B cell (primary cell): ENCODE measurements at regions of chr16 and their contacts with region 1.

Region 1: DNA sequence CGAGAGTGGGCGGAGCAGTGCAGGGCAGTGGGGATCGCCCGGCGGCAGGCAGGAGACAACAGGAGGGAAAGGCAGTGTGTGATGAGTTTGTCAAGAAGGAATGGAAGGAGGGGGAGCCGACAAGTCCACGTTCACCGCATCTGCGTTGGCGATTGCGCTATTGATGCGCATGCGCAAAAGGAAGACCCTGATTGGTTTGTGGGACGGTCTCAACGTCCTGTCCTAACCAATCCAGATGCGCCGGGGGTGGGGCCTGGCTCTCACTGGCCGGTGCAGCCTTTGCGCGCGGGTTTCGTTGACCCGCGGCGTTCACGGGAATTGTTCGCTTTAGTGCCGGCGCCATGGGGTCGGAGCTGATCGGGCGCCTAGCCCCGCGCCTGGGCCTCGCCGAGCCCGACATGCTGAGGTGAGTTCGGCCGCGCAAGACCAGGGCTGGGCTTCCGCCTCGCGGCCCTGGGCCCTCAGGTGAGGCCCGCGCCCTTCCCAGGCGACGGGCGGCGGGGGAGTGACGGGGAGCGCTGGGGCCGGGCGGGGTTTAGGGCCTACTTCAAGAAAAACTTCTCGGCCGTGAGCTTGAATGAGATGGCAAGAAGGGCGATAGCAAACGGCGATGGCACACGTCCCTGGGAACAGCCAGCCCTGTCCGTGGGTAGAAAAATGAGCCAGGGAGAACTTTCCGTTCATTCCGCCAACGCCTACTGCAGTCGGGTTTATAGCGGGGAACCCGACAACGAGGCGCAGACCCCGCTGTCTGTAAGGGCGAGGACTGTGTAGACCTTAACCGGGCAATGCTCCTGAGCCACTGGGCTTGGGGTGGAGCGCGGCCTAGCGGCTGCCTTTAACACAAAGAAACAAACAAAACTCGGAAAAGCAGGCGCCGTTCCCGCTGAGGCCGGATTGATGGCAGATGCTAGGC is at the start of gene ORC6:
- DNase-seq: peak; percentile 100
- ATAC-seq: peak; percentile 74
- H3K4me3 ChIP-seq: peak within 1 kb of the TSS; percentile 97 to 98 (median 98)
- H3K4me3 Mint-ChIP-seq: no peak within 1 kb of the TSS
- H3K27ac ChIP-seq: peak within 1 kb of the TSS; percentile 94 to 95
- H3K27ac Mint-ChIP-seq: no peak within 1 kb of the TSS
- H3K4me1 ChIP-seq: peaks cover 48 to 50% of the 10 kb centered on the region in 2 donors
- H3K4me1 Mint-ChIP-seq: peaks cover 34% of the 10 kb centered on the region
- H3K27me3 ChIP-seq: no peaks in the 10 kb centered on the region
- H3K27me3 Mint-ChIP-seq: no peaks in the 10 kb centered on the region
- CTCF ChIP-seq: peak; percentile 61
- total RNA-seq, gene ORC6: 4.7 and 7.0 TPM in 2 replicates

Region 2: GRCh38 chr16:46621006-46621933 is 68.4 kb before region 1 on chr16 and contains the start of gene SHCBP1:
- CTCF ChIA-PET with region 1: no interaction called
- POLR2A ChIA-PET with region 1: no interaction called
- intact Hi-C with region 1: loop called (anchors 2 kb)
- DNase-seq: peak; percentile 78
- ATAC-seq: peak; percentile 94
- H3K4me3 ChIP-seq: peak within 1 kb of the TSS; percentile 54 to 78 (median 70)
- H3K4me3 Mint-ChIP-seq: peak within 1 kb of the TSS; percentile 97
- H3K27ac ChIP-seq: peak within 1 kb of the TSS; percentile 39 to 48
- H3K27ac Mint-ChIP-seq: peak within 1 kb of the TSS; percentile 73
- H3K4me1 ChIP-seq: peaks cover 15 to 16% of the 10 kb centered on the region in 2 donors
- H3K4me1 Mint-ChIP-seq: peaks cover 28% of the 10 kb centered on the region
- H3K27me3 ChIP-seq: no peaks in the 10 kb centered on the region
- H3K27me3 Mint-ChIP-seq: no peaks in the 10 kb centered on the region
- CTCF ChIP-seq: no peak
- total RNA-seq, gene SHCBP1: 1.7 and 4.2 TPM in 2 replicates

Region 3: GRCh38 chr16:46709469-46710005 is 19.9 kb after region 1 on chr16:
- CTCF ChIA-PET with region 1: no interaction called
- POLR2A ChIA-PET with region 1: no interaction called
- intact Hi-C with region 1: no loop called
- DNase-seq: no peak
- ATAC-seq: no peak
- H3K4me3 ChIP-seq: no peak overlapping the region
- H3K4me3 Mint-ChIP-seq: no peak overlapping the region
- H3K27ac ChIP-seq: no peak overlapping the region
- H3K27ac Mint-ChIP-seq: no peak overlapping the region
- H3K4me1 ChIP-seq: peaks cover 15 to 18% of the 10 kb centered on the region in 2 donors
- H3K4me1 Mint-ChIP-seq: peaks cover 14% of the 10 kb centered on the region
- H3K27me3 ChIP-seq: no peaks in the 10 kb centered on the region
- H3K27me3 Mint-ChIP-seq: no peaks in the 10 kb centered on the region
- CTCF ChIP-seq: no peak

Region 4: DNA sequence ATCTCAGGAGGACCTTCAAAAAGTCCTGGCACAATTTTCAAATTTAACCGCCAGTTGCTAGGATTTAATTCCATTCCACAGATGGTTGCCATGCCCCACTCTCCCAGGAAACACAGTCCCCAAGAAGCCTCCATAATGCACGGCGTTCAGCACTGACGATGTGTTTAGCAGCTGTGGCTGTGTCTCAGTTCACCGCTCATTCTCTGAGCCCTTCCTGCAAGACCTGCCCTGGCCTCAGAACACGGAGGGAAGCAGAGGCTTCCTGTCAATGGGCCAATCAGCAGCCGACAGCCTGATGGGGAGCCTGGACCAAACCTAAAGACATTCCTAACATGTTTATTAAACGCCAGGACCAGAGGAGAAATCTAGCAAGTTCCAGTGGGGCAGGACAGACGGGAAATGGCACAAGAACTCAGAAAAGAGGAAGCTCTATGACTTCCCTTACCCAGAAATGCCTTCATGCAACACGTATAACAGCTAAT is 53.7 kb after region 1 on chr16:
- CTCF ChIA-PET with region 1: no interaction called
- POLR2A ChIA-PET with region 1: no interaction called
- intact Hi-C with region 1: loop called (anchors 2 kb)
- DNase-seq: peak; percentile 71
- ATAC-seq: peak; percentile 76
- H3K4me3 ChIP-seq: peak overlapping the region in 4 of 5 experiments; percentile 27 to 68 (median 49)
- H3K4me3 Mint-ChIP-seq: peak overlapping the region; percentile 83
- H3K27ac ChIP-seq: peak overlapping the region; percentile 69 to 76
- H3K27ac Mint-ChIP-seq: peak overlapping the region; percentile 95
- H3K4me1 ChIP-seq: peaks cover 22 to 25% of the 10 kb centered on the region in 2 donors
- H3K4me1 Mint-ChIP-seq: peaks cover 26% of the 10 kb centered on the region
- H3K27me3 ChIP-seq: no peaks in the 10 kb centered on the region
- H3K27me3 Mint-ChIP-seq: no peaks in the 10 kb centered on the region
- CTCF ChIP-seq: no peak

Region 5: DNA sequence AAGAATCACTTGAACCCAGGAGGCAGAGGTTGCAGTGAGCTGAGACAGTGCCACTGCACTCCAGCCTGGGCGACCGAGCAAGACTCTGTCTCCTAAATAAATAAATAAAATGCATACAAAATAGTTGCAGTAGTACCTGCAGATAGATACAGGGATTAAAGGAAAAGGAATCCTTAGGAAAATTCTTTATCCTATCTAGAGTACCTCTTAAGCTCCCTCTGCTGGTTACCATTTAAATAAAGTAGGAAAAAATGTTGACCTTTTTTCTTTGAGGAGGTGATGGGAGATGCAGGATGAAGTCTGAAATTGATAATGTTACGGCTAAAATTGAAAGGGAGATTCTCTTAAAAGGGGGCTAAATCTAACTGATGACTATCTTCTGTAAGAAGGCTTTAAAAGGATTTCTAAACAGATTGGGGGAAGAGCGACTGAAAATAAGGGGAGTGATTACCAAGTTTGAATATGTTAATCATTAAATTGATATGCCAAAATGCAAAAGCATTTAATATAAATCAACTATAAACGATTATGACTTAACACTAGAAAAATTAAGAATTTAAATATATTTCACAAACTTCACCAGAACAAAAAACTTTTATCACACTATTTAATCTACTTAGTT is 111.9 kb after region 1 on chr16:
- CTCF ChIA-PET with region 1: interaction called, 12 read pairs
- POLR2A ChIA-PET with region 1: no interaction called
- intact Hi-C with region 1: no loop called
- DNase-seq: peak; percentile 30
- ATAC-seq: no peak
- H3K4me3 ChIP-seq: no peak overlapping the region
- H3K4me3 Mint-ChIP-seq: no peak overlapping the region
- H3K27ac ChIP-seq: no peak overlapping the region
- H3K27ac Mint-ChIP-seq: no peak overlapping the region
- H3K4me1 ChIP-seq: no peaks in the 10 kb centered on the region
- H3K4me1 Mint-ChIP-seq: peaks cover 4% of the 10 kb centered on the region
- H3K27me3 ChIP-seq: no peaks in the 10 kb centered on the region
- H3K27me3 Mint-ChIP-seq: no peaks in the 10 kb centered on the region
- CTCF ChIP-seq: peak; percentile 44

Region 6: GRCh38 chr16:46883690-46884512 is 194.3 kb after region 1 on chr16 and contains the start of gene GPT2:
- CTCF ChIA-PET with region 1: no interaction called
- POLR2A ChIA-PET with region 1: no interaction called
- intact Hi-C with region 1: loop called (anchors 1 kb)
- DNase-seq: peak; percentile 83
- ATAC-seq: peak; percentile 95
- H3K4me3 ChIP-seq: peak within 1 kb of the TSS; percentile 48 to 84 (median 72)
- H3K4me3 Mint-ChIP-seq: peak within 1 kb of the TSS; percentile 89
- H3K27ac ChIP-seq: no peak within 1 kb of the TSS
- H3K27ac Mint-ChIP-seq: peak within 1 kb of the TSS; percentile 67
- H3K4me1 ChIP-seq: peaks cover 9 to 11% of the 10 kb centered on the region in 2 donors
- H3K4me1 Mint-ChIP-seq: peaks cover 18% of the 10 kb centered on the region
- H3K27me3 ChIP-seq: peaks cover 0 to 5% (median 2%) of the 10 kb centered on the region in 4 experiments
- H3K27me3 Mint-ChIP-seq: no peaks in the 10 kb centered on the region
- CTCF ChIP-seq: no peak
- total RNA-seq, gene GPT2: 9.9 and 11.0 TPM in 2 replicates

Region 7: DNA sequence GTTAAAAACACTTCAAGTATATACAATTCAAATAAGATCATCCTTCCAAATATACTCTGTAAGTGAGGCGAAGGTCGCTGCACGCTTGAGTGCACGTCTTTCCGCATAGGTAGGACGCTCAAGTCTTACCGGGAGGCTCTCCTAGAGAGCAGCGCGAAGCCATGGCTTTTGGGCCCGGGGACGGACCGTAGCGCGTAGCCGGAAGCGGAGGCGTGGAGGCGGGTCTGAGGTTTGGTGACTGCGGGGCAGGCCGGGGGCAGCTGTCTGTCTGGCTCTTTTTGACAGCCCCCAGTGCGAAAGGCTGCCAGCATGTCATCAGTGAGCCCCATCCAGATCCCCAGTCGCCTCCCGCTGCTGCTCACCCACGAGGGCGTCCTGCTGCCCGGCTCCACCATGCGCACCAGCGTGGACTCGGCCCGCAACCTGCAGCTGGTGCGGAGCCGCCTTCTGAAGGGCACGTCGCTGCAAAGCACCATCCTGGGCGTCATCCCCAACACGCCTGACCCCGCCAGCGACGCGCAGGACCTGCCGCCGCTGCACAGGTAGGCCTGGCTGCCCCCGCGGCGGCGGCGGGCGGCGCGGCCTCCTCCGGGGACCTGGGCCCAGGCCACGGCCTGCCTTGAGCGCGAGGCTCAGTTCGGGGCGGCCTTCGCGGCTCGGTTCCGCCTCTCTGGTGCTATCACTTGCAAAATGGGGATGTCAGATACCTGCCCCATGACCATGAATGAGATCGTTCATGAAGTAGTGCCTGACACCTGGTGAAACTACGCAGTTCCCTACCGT is 1554.6 kb after region 1 on chr16 and contains the start of gene LONP2:
- CTCF ChIA-PET with region 1: no interaction called
- POLR2A ChIA-PET with region 1: no interaction called
- intact Hi-C with region 1: loop called (anchors 5 kb)
- DNase-seq: peak; percentile 91
- ATAC-seq: peak; percentile 96
- H3K4me3 ChIP-seq: peak within 1 kb of the TSS; percentile 60 to 87 (median 78)
- H3K4me3 Mint-ChIP-seq: peak within 1 kb of the TSS; percentile 91
- H3K27ac ChIP-seq: peak within 1 kb of the TSS; percentile 78 to 90
- H3K27ac Mint-ChIP-seq: peak within 1 kb of the TSS; percentile 79
- H3K4me1 ChIP-seq: peaks cover 16 to 22% of the 10 kb centered on the region in 2 donors
- H3K4me1 Mint-ChIP-seq: peaks cover 27% of the 10 kb centered on the region
- H3K27me3 ChIP-seq: no peaks in the 10 kb centered on the region
- H3K27me3 Mint-ChIP-seq: no peaks in the 10 kb centered on the region
- CTCF ChIP-seq: no peak
- total RNA-seq, gene LONP2: 84.2 and 87.2 TPM in 2 replicates